ENCODE measurements at regions of chr12 and their contacts with region 1.

Region 1: DNA sequence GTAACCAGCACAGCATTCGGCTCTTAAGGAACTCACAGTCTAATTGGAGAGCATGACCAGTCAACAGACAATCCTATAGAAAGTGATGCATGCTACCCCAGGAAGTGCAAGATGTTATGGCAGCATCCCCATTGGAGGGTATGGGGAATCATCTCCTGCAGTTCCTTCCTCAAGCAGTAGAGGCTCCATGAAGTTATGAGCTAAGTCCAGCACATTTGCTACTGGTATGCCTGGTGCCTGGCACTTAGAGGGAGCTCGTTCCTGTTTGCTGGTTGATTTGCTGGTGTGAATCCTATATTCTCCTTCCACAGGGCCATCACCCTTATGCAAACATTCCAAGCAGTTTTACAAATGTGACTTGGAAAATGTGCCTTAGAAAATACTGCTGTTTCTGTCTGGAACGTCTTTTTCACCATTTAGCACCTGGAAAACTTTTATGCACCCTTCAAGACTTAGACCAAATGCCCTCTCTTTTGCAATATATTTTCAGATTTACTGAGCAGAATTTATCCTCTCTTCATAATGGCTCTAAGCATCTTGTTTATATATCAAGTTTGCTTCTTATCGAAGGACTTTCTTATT is 136.1 kb upstream of the WSCD2 start:
- DNase-seq: peak; percentile 10
- CTCF ChIP-seq: peak; percentile 38

Region 2: DNA sequence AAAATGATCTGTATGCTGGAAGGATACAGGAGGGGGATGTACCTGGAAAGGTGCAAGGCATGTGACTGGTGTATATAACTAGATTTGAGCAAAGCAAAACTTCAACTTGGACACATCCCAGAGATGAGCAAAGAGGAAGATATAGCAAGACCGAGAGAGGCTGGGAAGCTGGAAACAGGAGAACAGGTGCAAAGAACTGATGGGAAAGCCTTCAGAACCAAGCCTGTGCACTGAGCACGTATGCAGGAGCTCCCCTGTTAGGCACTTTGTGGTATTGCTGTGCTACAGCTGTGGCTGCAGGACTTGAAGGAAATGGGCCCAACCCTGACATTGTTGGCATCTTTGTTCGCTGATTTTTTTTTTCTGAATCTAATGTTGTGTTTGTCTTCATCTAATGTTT is 428.0 kb before region 1 on chr12:
- CTCF ChIA-PET with region 1: no interaction called
- POLR2A ChIA-PET with region 1: no interaction called
- DNase-seq: no peak
- CTCF ChIP-seq: peak; percentile 31

Region 3: GRCh38 chr12:107978201-107978600 is 14.8 kb before region 1 on chr12:
- CTCF ChIA-PET with region 1: interaction called, 46 read pairs
- POLR2A ChIA-PET with region 1: no interaction called
- DNase-seq: no peak
- CTCF ChIP-seq: no peak

Measured in GM10248 (cell line).